ENCODE measurements at regions of chr7 and their contacts with region 1.

Region 1: DNA sequence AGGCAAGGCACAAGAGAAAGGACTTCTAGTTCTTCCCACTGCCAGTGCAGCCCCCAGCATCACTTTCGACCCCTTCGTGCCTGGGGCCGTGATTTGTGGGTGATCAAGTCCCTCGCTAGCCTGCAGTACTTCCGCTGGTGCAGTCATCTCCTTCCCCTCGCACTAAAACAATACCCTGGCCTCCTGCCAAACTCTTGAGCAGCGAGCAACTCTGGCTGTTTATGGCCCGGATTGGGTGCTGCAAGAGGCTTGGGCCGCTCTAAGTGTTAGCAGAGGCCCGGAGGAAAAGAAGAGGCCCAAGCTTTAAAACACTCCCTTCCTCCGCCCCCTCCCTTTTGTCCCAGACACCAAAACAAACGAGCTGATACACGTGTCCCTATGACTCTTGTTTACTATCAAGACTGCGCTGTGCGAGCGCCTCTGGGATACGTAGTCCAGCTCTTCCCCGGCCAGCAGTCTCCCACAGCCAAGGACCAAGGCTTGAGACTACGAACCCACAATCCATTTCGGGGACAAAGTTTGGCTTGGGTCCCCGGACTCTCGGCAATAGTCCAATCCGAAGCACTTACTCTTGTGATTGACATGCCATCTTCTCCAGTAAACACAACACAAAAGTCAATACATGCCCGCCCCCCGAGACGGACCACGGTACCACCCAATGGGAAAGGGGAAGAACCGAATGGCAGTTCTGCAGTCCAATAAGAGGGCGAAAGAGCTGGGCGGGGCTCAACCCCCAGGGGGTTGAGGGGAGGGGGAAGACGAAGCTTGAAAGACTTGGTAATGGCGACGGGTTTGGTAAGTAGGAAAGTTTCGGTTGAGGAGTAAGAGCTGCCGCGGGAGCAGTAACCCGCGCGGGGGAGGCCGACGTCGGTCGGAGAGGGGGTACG is at the start of gene HBP1:
- DNase-seq: peak; percentile 84
- ATAC-seq: peak; percentile 80
- H3K4me3 Mint-ChIP-seq: peak within 1 kb of the TSS; percentile 99
- H3K27ac Mint-ChIP-seq: peak within 1 kb of the TSS; percentile 99
- H3K4me1 Mint-ChIP-seq: peaks cover 45% of the 10 kb centered on the region
- H3K27me3 Mint-ChIP-seq: peaks cover 6% of the 10 kb centered on the region
- CTCF ChIP-seq: no peak
- total RNA-seq, gene HBP1: 53.6 and 59.9 TPM in 2 replicates

Region 2: GRCh38 chr7:106112117-106112971 is 1056.1 kb before region 1 on chr7 and contains the start of gene SYPL1:
- CTCF ChIA-PET with region 1: no interaction called
- POLR2A ChIA-PET with region 1: no interaction called
- intact Hi-C with region 1: loop called (anchors 1 kb)
- DNase-seq: peak; percentile 94
- ATAC-seq: peak; percentile 76
- H3K4me3 Mint-ChIP-seq: peak within 1 kb of the TSS; percentile 94
- H3K27ac Mint-ChIP-seq: peak within 1 kb of the TSS; percentile 97
- H3K4me1 Mint-ChIP-seq: peaks cover 80% of the 10 kb centered on the region
- H3K27me3 Mint-ChIP-seq: no peaks in the 10 kb centered on the region
- CTCF ChIP-seq: no peak
- total RNA-seq, gene SYPL1: 109 and 116 TPM in 2 replicates

Region 3: GRCh38 chr7:106598663-106599342 is 569.7 kb before region 1 on chr7:
- CTCF ChIA-PET with region 1: no interaction called
- POLR2A ChIA-PET with region 1: interaction called, 7 read pairs
- intact Hi-C with region 1: loop called (anchors 5 kb)
- DNase-seq: peak; percentile 34
- ATAC-seq: peak; percentile 100
- H3K4me3 Mint-ChIP-seq: peak overlapping the region; percentile 52
- H3K27ac Mint-ChIP-seq: peak overlapping the region; percentile 68
- H3K4me1 Mint-ChIP-seq: peaks cover 6% of the 10 kb centered on the region
- H3K27me3 Mint-ChIP-seq: no peaks in the 10 kb centered on the region
- CTCF ChIP-seq: no peak

Region 4: DNA sequence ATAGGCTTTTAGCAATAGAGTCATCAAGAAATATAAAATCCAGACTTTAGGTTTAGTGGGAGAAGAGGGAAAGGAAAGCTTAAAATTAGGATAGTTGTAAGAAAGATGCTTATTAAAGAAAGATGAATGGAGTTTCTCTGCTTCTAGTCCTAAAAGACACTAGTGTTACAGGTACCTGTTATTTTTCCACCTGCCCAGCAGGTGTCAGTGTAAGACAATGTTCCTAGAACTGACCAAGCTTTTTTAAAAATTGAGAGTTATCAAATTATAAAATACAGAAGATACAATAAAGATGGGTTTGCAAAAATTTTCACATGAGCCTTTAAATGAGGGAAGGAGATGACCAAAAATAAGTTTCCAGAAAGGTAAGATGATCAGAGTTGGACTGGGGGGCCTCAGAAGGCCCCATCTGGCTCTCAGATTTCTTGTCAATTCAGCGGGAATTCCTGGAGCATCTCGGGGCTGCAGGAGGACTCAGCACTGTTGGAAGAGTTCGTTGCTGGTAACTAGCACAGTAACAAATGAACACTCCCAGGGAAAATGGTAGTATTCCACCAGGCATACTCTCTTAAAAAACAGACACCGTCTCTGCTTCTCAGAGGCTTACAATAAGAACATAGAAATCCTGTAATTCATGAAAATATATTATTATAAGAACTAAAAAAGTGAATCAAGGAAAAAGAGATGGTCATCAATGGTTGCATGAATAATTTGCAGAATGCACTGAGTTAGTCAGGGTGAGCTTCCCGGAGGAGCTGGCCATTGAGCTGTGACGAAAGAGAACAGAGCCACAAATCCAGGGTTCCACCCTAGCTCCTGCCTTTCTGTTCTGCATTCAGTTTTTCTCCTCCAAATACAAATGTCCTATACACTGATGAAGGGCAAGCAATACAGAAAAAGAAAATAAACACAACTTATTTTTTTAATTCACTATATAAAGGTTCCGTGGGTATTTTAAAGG is 375.2 kb before region 1 on chr7:
- CTCF ChIA-PET with region 1: interaction called, 4 read pairs
- POLR2A ChIA-PET with region 1: interaction called, 3 read pairs
- intact Hi-C with region 1: loop called (anchors 5 kb)
- DNase-seq: no peak
- ATAC-seq: peak; percentile 60
- H3K4me3 Mint-ChIP-seq: no peak overlapping the region
- H3K27ac Mint-ChIP-seq: no peak overlapping the region
- H3K4me1 Mint-ChIP-seq: peaks cover 2% of the 10 kb centered on the region
- H3K27me3 Mint-ChIP-seq: peaks cover 4% of the 10 kb centered on the region
- CTCF ChIP-seq: peak; percentile 92

Region 5: GRCh38 chr7:106812027-106812643 is 356.3 kb before region 1 on chr7:
- CTCF ChIA-PET with region 1: no interaction called
- POLR2A ChIA-PET with region 1: no interaction called
- intact Hi-C with region 1: no loop called
- DNase-seq: no peak
- ATAC-seq: peak; percentile 68
- H3K4me3 Mint-ChIP-seq: peak overlapping the region; percentile 5
- H3K27ac Mint-ChIP-seq: peak overlapping the region; percentile 44
- H3K4me1 Mint-ChIP-seq: peaks cover 18% of the 10 kb centered on the region
- H3K27me3 Mint-ChIP-seq: no peaks in the 10 kb centered on the region
- CTCF ChIP-seq: no peak

Region 6: DNA sequence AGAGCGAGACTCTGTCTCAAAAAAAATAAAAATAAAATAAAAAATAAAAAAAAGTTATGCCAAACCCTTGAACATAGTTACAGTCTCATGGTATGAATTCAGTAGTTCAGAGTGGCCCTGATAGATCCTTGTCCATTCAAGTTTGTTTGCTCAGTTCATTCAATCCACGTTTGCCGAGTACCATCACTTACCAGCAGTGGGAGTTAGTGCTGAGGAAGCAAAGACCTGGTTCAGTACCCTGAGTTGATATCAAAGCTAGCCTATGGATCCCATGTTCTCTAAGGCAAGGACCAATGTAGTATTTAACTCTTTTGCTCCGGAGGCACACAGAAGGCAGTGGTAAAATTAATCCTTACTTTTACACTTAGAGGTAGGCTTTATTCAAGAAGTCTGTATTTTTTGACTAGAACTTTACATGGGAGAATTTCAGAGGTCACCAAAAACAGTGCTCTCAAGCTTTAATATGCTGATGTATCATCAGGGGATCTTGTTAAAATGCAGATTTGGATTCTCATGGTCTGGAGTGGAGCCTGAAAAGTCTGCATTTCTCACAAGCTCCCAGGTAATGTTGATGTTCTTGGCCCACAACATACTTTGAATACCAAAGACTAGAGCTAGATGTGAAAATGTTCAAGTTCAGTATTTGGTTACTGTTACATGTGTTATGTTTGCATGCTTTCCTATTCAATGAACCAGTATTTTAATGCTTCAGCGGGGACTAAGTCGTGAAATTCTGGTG is 37.8 kb before region 1 on chr7:
- CTCF ChIA-PET with region 1: no interaction called
- POLR2A ChIA-PET with region 1: interaction called, 21 read pairs
- intact Hi-C with region 1: loop called (anchors 1 kb)
- DNase-seq: no peak
- ATAC-seq: no peak
- H3K4me3 Mint-ChIP-seq: no peak overlapping the region
- H3K27ac Mint-ChIP-seq: no peak overlapping the region
- H3K4me1 Mint-ChIP-seq: peaks cover 11% of the 10 kb centered on the region
- H3K27me3 Mint-ChIP-seq: no peaks in the 10 kb centered on the region
- CTCF ChIP-seq: no peak

Region 7: GRCh38 chr7:107638594-107638993 is 470.1 kb after region 1 on chr7:
- CTCF ChIA-PET with region 1: no interaction called
- POLR2A ChIA-PET with region 1: no interaction called
- intact Hi-C with region 1: loop called (anchors 5 kb)
- DNase-seq: no peak
- ATAC-seq: peak; percentile 77
- H3K4me3 Mint-ChIP-seq: peak overlapping the region; percentile 75
- H3K27ac Mint-ChIP-seq: peak overlapping the region; percentile 95
- H3K4me1 Mint-ChIP-seq: peaks cover 65% of the 10 kb centered on the region
- H3K27me3 Mint-ChIP-seq: no peaks in the 10 kb centered on the region
- CTCF ChIP-seq: no peak

Region 8: GRCh38 chr7:108569381-108570145 is 1401.1 kb after region 1 on chr7 and contains the starts of genes DNAJB9 and THAP5:
- CTCF ChIA-PET with region 1: no interaction called
- POLR2A ChIA-PET with region 1: interaction called, 5 read pairs
- intact Hi-C with region 1: loop called (anchors 2 kb)
- DNase-seq: peak; percentile 97
- ATAC-seq: peak; percentile 89
- H3K4me3 Mint-ChIP-seq: peak within 1 kb of the TSS; percentile 98
- H3K27ac Mint-ChIP-seq: peak within 1 kb of the TSS; percentile 99
- H3K4me1 Mint-ChIP-seq: peaks cover 66% of the 10 kb centered on the region
- H3K27me3 Mint-ChIP-seq: no peaks in the 10 kb centered on the region
- CTCF ChIP-seq: no peak
- total RNA-seq, gene DNAJB9: 9.0 and 9.9 TPM in 2 replicates
- total RNA-seq, gene THAP5: 22.1 and 26.3 TPM in 2 replicates

Measured in activated B cell treated with CpG ODN at 0.5 μM for 24 hours (primary cell).